ENCODE measurements at regions of chr6 and their contacts with region 1.

Region 1: GRCh38 chr6:79570129-79571029 is 33.1 kb upstream of the LCA5 start:
- DNase-seq: peak; percentile 80
- ATAC-seq: peak; percentile 81
- H3K4me3 ChIP-seq: peak overlapping the region in 1 of 2 experiments; percentile 40; a peak in 2 of 4 replicates
- H3K27ac ChIP-seq: peak overlapping the region; percentile 38; the same call in 1 of the 2 replicates
- H3K4me1 ChIP-seq: peaks cover 28 to 40% of the 10 kb centered on the region in 2 experiments
- H3K27me3 ChIP-seq: no peaks in the 10 kb centered on the region
- CTCF ChIP-seq: peak; percentile 55 to 80 (median 74)
- POLR2A ChIP-seq: no peak
- RAD21 ChIP-seq: peak; percentile 79

Region 2: DNA sequence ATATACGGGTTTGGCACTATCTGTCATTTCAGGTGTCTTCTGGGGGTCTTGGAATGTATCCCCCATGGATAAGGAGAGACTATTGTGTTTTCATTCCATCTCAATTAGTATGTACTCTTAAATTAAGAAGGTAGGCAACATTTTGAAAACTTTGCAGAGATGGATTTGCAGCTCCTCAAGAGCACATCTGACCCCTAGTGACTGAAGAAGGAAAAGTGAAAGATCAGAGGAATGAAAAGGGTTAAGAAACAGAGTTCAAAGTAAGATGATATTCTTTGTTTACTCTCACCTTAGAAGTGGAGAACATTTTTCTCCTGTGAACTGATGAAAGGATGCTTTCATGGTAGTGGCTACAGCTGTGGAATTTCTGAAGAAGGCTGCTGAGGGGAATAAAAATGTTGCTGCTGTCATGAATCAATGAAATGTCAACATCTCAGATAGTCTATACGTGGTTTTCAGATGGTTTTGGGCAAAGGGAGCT is 102.3 kb after region 1 on chr6:
- CTCF ChIA-PET with region 1: interaction called, 23 read pairs
- POLR2A ChIA-PET with region 1: interaction called, 3 read pairs
- RAD21 ChIA-PET with region 1: no interaction called
- intact Hi-C with region 1: loop called (anchors 1 kb)
- DNase-seq: peak; percentile 32
- ATAC-seq: peak; percentile 62
- H3K4me3 ChIP-seq: no peak overlapping the region
- H3K27ac ChIP-seq: no peak overlapping the region
- H3K4me1 ChIP-seq: peaks cover 14 to 23% of the 10 kb centered on the region in 2 experiments
- H3K27me3 ChIP-seq: no peaks in the 10 kb centered on the region
- CTCF ChIP-seq: peak; percentile 58 to 81 (median 59); a peak in 5 of 6 replicates
- POLR2A ChIP-seq: no peak
- RAD21 ChIP-seq: peak; percentile 86

Region 3: GRCh38 chr6:79713701-79714322 is 143.4 kb after region 1 on chr6:
- CTCF ChIA-PET with region 1: no interaction called
- POLR2A ChIA-PET with region 1: no interaction called
- RAD21 ChIA-PET with region 1: no interaction called
- intact Hi-C with region 1: loop called (anchors 2 kb)
- DNase-seq: peak; percentile 47
- ATAC-seq: peak; percentile 92
- H3K4me3 ChIP-seq: no peak overlapping the region
- H3K27ac ChIP-seq: no peak overlapping the region
- H3K4me1 ChIP-seq: no peaks in the 10 kb centered on the region
- H3K27me3 ChIP-seq: no peaks in the 10 kb centered on the region
- CTCF ChIP-seq: peak; percentile 41 to 74 (median 69); a peak in 5 of 6 replicates
- POLR2A ChIP-seq: no peak
- RAD21 ChIP-seq: peak; percentile 73

Region 4: GRCh38 chr6:79813854-79814709 is 243.7 kb after region 1 on chr6:
- CTCF ChIA-PET with region 1: no interaction called
- POLR2A ChIA-PET with region 1: no interaction called
- RAD21 ChIA-PET with region 1: no interaction called
- intact Hi-C with region 1: loop called (anchors 2 kb)
- DNase-seq: peak; percentile 62
- ATAC-seq: peak; percentile 93
- H3K4me3 ChIP-seq: no peak overlapping the region
- H3K27ac ChIP-seq: no peak overlapping the region
- H3K4me1 ChIP-seq: peaks cover 0 to 5% of the 10 kb centered on the region in 2 experiments; a peak in 1 of 4 replicates
- H3K27me3 ChIP-seq: no peaks in the 10 kb centered on the region
- CTCF ChIP-seq: peak; percentile 75 to 88 (median 85); a peak in 5 of 6 replicates
- POLR2A ChIP-seq: no peak
- RAD21 ChIP-seq: peak; percentile 76

Region 5: DNA sequence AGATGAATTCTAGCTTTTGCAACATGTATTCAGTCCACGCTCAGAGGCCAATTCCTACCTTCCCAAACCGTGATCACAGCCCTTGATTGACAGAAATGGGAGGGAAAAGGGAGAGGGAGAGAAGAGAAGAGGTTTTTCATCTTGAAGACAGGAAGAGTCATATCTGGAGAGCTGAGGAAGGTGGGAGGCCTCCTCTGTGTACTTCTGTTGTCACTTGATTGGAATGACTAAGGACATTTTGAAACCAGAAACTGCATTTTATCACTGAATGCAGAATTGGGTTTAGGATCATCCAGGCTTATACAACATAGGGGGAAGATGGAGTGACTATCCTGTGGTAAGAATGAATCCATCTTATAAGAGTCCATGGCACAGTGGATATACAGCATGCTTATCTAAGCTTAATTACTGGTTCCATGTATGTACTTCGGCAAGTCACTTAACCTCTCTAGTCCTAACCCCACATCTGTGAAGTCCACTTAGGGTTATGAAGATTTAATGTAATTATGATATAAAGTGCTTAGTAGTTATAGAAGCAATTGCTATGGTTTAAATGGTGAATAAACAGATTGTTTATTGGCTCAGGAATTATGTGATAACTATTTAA is 680.1 kb after region 1 on chr6:
- CTCF ChIA-PET with region 1: no interaction called
- POLR2A ChIA-PET with region 1: no interaction called
- RAD21 ChIA-PET with region 1: no interaction called
- intact Hi-C with region 1: no loop called
- DNase-seq: no peak
- ATAC-seq: no peak
- H3K4me3 ChIP-seq: no peak overlapping the region
- H3K27ac ChIP-seq: no peak overlapping the region
- H3K4me1 ChIP-seq: no peaks in the 10 kb centered on the region
- H3K27me3 ChIP-seq: no peaks in the 10 kb centered on the region
- CTCF ChIP-seq: no peak
- POLR2A ChIP-seq: no peak
- RAD21 ChIP-seq: no peak

Measured in HCT116 (cell line).